ENCODE measurements at regions of chr11 and their contacts with region 1.

Region 1: GRCh38 chr11:114774599-114775361 is 96.5 kb downstream of the NXPE2 start:
- DNase-seq: peak; percentile 46
- ATAC-seq: peak; percentile 98
- H3K4me3 ChIP-seq: no peak overlapping the region
- H3K27ac ChIP-seq: no peak overlapping the region
- H3K4me1 ChIP-seq: no peaks in the 10 kb centered on the region
- H3K27me3 ChIP-seq: peaks cover 2% of the 10 kb centered on the region; the same call in 1 of the 2 replicates
- CTCF ChIP-seq: peak; percentile 78
- POLR2A ChIP-seq: no peak
- RAD21 ChIP-seq: peak; percentile 89

Region 2: GRCh38 chr11:114713756-114714155 is 61.0 kb before region 1 on chr11:
- CTCF ChIA-PET with region 1: no interaction called
- POLR2A ChIA-PET with region 1: no interaction called
- dilution Hi-C with region 1: no loop called
- in situ Hi-C with region 1: no loop called
- intact Hi-C with region 1: no loop called
- DNase-seq: no peak
- ATAC-seq: no peak
- H3K4me3 ChIP-seq: no peak overlapping the region
- H3K27ac ChIP-seq: no peak overlapping the region
- H3K4me1 ChIP-seq: no peaks in the 10 kb centered on the region
- H3K27me3 ChIP-seq: no peaks in the 10 kb centered on the region
- CTCF ChIP-seq: no peak
- POLR2A ChIP-seq: no peak
- RAD21 ChIP-seq: no peak

Region 3: GRCh38 chr11:116224154-116224888 is 1449.5 kb after region 1 on chr11:
- CTCF ChIA-PET with region 1: no interaction called
- POLR2A ChIA-PET with region 1: no interaction called
- dilution Hi-C with region 1: no loop called
- in situ Hi-C with region 1: no loop called
- intact Hi-C with region 1: loop called (anchors 2 kb)
- DNase-seq: peak; percentile 22
- ATAC-seq: peak; percentile 87
- H3K4me3 ChIP-seq: no peak overlapping the region
- H3K27ac ChIP-seq: no peak overlapping the region
- H3K4me1 ChIP-seq: no peaks in the 10 kb centered on the region
- H3K27me3 ChIP-seq: no peaks in the 10 kb centered on the region
- CTCF ChIP-seq: peak; percentile 60
- POLR2A ChIP-seq: no peak
- RAD21 ChIP-seq: peak; percentile 53

Region 4: GRCh38 chr11:116276051-116277044 is 1501.6 kb after region 1 on chr11:
- CTCF ChIA-PET with region 1: no interaction called
- POLR2A ChIA-PET with region 1: no interaction called
- dilution Hi-C with region 1: no loop called
- in situ Hi-C with region 1: no loop called
- intact Hi-C with region 1: loop called (anchors 1 kb)
- DNase-seq: peak; percentile 30
- ATAC-seq: peak; percentile 60; the same call in 1 of the 2 replicates
- H3K4me3 ChIP-seq: no peak overlapping the region
- H3K27ac ChIP-seq: no peak overlapping the region
- H3K4me1 ChIP-seq: no peaks in the 10 kb centered on the region
- H3K27me3 ChIP-seq: no peaks in the 10 kb centered on the region; the same call in 1 of the 2 replicates
- CTCF ChIP-seq: peak; percentile 63
- POLR2A ChIP-seq: no peak
- RAD21 ChIP-seq: peak; percentile 74

Region 5: DNA sequence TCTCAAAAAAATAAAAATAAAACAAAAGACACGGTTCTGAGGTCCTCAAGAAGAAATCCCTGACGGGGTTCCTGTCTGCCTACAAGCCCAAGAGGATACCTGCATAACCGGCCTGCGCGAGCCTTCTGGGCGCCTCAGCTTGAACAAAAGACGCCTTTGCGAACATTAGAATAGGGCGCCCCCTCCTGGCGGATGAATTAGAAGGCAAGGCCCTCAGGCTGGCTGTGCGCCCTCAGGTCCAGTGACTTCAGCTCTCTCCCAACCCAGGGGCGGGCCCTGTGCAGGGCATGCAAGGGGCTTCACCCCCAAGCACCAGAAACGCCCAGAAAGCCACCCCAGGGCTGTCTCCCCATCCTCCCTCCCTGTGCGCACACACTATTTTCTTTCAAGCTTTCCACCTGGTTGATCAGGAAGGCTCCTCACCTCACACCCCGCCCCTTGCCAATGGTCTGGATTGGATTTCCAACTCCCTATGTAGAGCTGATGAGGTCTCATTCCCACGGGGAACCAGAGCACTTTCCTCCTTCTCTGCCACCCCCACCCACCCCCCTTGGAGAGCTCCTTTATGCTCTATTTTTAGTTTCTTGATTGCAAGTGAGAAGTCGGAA is 1724.7 kb after region 1 on chr11:
- CTCF ChIA-PET with region 1: no interaction called
- POLR2A ChIA-PET with region 1: no interaction called
- dilution Hi-C with region 1: no loop called
- in situ Hi-C with region 1: no loop called
- intact Hi-C with region 1: loop called (anchors 10 kb)
- DNase-seq: peak; percentile 22
- ATAC-seq: 0 out of 2 replicates have a peak, but pooled peaks have one; percentile 24
- H3K4me3 ChIP-seq: no peak overlapping the region
- H3K27ac ChIP-seq: no peak overlapping the region
- H3K4me1 ChIP-seq: no peaks in the 10 kb centered on the region
- H3K27me3 ChIP-seq: peaks cover 29% of the 10 kb centered on the region
- CTCF ChIP-seq: peak; percentile 46
- POLR2A ChIP-seq: no peak
- RAD21 ChIP-seq: peak; percentile 42; the same call in 1 of the 2 replicates